ENCODE measurements at regions of chr7 and their contacts with region 1.

Region 1: DNA sequence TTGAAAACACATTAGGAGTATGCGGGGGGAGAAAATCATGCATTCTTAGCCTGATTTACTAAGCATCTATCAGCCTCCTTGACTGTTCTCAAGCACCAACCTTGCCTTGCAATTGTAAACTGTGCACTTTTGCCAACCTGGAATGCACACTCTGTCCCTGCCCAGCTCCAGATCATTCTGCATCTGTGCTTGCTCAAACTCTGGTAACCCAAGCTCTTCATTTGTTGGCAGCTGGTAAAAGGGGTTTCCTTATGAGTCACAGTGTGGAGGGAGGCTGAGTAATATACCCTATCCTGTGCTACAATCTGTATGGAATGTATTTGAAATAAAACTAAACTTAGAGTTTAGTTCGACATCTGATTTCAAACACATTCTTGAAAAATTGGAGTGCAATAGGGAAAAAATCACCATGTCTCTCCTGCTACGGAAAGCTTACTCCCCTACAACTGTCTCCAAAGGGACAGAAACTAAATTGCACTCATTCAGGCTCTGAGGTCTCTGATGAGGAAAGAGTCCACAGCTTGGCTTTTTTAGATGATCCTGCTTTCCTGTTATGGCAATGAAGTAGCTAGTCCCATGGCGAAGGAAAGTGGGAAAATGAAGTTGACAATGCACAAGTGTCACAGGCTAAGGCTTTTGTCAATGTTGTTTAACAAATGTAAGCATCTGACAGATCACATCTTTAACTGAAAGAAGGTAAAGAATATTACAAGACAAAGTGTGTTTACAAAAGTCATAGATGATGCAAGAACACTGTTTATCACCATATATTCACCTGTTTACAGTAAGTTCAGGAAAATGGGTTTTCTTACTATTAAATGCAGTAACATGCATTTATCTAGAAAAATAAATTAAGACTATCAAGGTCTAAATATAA is 61.9 kb downstream of the TES start:
- DNase-seq: peak; percentile 80 to 95
- H3K4me3 ChIP-seq: peak overlapping the region; percentile 32; the same call in 1 of the 2 replicates
- H3K27ac ChIP-seq: peak overlapping the region; percentile 93
- H3K4me1 ChIP-seq: peaks cover 49% of the 10 kb centered on the region
- H3K27me3 ChIP-seq: no peaks in the 10 kb centered on the region
- CTCF ChIP-seq: no peak

Region 2: DNA sequence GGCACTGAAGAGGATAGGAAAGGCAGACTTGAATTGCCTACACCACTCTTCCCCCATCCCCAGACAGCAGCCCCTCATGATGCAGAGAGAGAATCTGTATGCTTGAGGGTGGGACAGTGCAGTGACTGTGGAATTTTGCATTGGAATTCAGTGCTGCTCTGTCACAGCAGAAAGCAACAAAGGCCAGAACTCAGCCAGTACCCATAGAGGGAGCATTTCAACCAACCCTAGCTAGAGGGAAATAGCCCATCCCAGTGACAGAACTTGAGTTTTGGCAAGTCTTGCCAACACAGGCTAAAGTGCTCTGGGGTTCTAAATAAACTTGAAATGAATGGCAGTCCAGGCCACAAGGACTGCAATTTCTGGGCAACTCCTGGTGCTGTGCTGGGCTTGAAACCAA is 18.5 kb after region 1 on chr7:
- CTCF ChIA-PET with region 1: interaction called, 16 read pairs
- POLR2A ChIA-PET with region 1: interaction called, 3 read pairs
- intact Hi-C with region 1: no loop called
- DNase-seq: no peak
- H3K4me3 ChIP-seq: no peak overlapping the region
- H3K27ac ChIP-seq: no peak overlapping the region
- H3K4me1 ChIP-seq: no peaks in the 10 kb centered on the region
- H3K27me3 ChIP-seq: no peaks in the 10 kb centered on the region
- CTCF ChIP-seq: no peak

Region 3: GRCh38 chr7:116316833-116317612 is 44.8 kb after region 1 on chr7:
- CTCF ChIA-PET with region 1: no interaction called
- POLR2A ChIA-PET with region 1: no interaction called
- intact Hi-C with region 1: loop called (anchors 1 kb)
- DNase-seq: peak; percentile 76 to 97
- H3K4me3 ChIP-seq: peak overlapping the region; percentile 29; the same call in 1 of the 2 replicates
- H3K27ac ChIP-seq: peak overlapping the region; percentile 88
- H3K4me1 ChIP-seq: peaks cover 31% of the 10 kb centered on the region
- H3K27me3 ChIP-seq: no peaks in the 10 kb centered on the region
- CTCF ChIP-seq: no peak

Region 4: DNA sequence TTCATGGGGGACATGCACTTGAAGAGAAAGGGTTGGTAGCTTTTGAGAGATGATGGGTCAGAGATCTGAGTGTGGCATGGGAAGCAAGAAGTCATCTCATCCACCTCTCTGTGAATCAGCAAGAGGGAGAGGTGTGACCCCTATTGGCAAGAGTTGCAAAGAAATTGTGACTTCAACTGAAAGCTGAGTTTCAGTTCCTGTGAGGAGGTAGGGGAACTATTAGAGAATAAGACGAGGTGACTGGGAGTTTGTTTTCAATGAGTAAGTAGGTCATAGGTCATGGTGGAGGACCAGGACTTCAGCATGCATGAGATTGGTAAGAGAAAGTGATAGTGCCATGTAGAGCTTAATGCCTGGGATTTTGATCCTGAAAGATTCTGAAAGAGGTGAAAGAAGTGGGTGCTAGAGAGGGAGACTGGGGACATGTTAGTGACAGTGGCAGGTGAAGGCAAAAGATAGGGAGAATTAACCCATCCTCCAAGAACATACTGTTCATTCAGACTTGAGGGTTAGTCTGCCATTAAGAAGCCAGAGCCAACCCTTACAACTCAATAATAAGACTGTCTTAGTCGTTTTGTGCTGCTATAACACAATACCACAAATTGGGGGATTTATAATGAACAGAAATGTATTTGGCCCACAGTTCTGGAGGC is 514.7 kb after region 1 on chr7:
- CTCF ChIA-PET with region 1: no interaction called
- POLR2A ChIA-PET with region 1: no interaction called
- intact Hi-C with region 1: no loop called
- DNase-seq: peak in 1 of 2 experiments; percentile 60
- H3K4me3 ChIP-seq: no peak overlapping the region
- H3K27ac ChIP-seq: no peak overlapping the region
- H3K4me1 ChIP-seq: peaks cover 41% of the 10 kb centered on the region
- H3K27me3 ChIP-seq: no peaks in the 10 kb centered on the region
- CTCF ChIP-seq: no peak; the same call in 1 of the 2 replicates